Posterior vena cava (tissue), 2 donors: ENCODE measurements at regions of chrX and their contacts with region 1.

Region 1: DNA sequence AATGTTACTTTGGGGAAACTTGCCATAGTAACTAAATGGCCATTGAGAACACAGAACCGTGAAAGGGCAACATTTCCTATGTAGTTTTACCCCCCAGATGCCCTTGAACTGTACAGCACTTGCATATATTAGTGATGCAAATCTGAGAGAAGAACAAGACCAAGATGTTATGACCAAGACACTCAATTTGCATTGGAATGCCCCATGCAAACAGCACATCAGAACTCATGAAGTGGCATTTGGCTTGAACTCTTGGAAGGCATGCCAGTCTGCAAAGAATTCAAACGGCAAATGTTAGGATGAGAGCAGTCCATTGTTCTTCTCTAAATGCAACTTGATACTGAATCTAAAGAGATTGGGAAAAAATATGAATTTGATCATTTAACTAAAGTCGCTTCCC is 139.4 kb upstream of the CXorf66 start:
- DNase-seq: no peak

Region 2: GRCh38 chrX:142054094-142054493 is 1949.3 kb after region 1 on chrX:
- intact Hi-C with region 1: loop called in 1 of 2 experiments (anchors 5 kb)
- DNase-seq: no peak